Naive thymus-derived CD4-positive, alpha-beta T cell (primary cell): ENCODE measurements at regions of chr16 and their contacts with region 1.

Region 1: DNA sequence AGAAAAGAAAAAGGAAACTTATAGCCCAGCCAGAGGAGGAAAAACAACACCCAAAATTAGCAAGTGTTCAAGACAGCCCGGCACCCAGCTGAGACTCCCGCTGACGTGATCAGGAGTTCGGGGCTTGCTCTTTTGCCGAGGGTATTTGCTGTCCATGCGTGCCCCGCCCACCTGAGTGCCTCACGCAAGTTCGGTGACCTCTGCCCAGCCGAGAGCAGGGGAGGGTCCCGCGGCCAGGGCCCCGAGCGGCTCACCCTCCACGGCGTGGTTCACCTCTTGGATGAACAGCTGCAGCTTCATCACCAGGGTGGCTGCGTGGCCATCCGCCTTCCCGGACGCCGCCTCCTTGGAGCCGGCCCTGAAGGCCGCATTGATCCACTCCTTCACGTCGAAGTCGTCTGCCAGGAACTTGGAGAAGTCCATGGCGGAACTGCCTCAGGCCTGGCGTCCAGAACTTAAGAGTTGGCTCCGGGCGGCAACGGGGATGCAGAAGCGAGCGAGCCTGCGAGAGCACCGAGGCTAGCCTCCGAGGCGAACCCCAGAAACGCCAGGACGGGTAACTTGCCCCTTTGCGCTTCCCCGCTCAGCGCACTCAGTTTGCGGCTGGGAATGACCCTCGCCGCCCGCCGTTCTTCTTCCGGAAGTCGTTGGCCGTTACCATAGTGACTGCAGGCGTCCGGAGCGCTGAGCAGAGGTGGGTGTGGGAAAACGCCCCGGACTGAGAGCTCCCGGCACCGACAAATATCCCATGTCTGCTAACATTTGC is at the start of gene COG7:
- DNase-seq: peak; percentile 71 to 88 (median 85)
- ATAC-seq: peak; percentile 94
- H3K4me3 ChIP-seq: peak within 1 kb of the TSS; percentile 92
- H3K4me3 Mint-ChIP-seq: peak within 1 kb of the TSS; percentile 88 to 99 (median 93)
- H3K27ac ChIP-seq: peak within 1 kb of the TSS; percentile 78
- H3K27ac Mint-ChIP-seq: peak within 1 kb of the TSS; percentile 87 to 96 (median 91)
- H3K4me1 ChIP-seq: peaks cover 9 to 10% of the 10 kb centered on the region in 2 donors
- H3K4me1 Mint-ChIP-seq: peaks cover 27 to 44% (median 39%) of the 10 kb centered on the region in 7 donors
- H3K27me3 ChIP-seq: no peaks in the 10 kb centered on the region
- H3K27me3 Mint-ChIP-seq: no peaks in the 10 kb centered on the region
- total RNA-seq, gene COG7: 16.1 to 28.4 (median 22.6) TPM

Region 2: DNA sequence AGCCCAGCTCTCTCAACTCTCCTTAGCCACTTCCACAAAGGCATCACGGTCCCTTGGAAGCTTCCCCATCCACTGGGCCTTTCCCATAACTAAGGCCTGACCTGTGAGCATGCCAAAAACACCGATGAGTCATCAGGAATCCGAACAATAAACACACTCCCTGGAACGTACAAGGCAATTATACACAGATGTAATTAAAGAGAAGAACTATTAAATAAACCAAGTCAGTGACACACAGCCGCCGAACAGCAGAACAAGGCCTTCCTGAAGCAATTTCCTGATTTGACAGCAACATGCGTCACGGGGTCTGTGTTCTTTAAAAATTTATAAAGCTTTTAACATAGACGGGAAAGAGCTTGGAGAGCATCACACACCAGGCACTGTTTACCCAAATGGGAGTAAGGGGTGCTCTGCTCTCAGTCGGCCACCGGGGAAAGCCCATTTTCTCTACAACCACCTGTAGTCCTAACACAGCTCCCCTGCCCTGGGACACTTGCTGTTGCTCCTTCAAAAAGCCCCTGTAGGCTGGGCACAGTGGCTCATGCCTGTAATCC is 29.2 kb before region 1 on chr16:
- CTCF ChIA-PET with region 1: no interaction called
- POLR2A ChIA-PET with region 1: no interaction called
- intact Hi-C with region 1: no loop called
- DNase-seq: no peak
- ATAC-seq: no peak
- H3K4me3 ChIP-seq: no peak overlapping the region
- H3K4me3 Mint-ChIP-seq: no peak overlapping the region
- H3K27ac ChIP-seq: no peak overlapping the region
- H3K27ac Mint-ChIP-seq: no peak overlapping the region
- H3K4me1 ChIP-seq: no peaks in the 10 kb centered on the region
- H3K4me1 Mint-ChIP-seq: peaks cover 0 to 2% (median 0%) of the 10 kb centered on the region in 7 donors
- H3K27me3 ChIP-seq: no peaks in the 10 kb centered on the region
- H3K27me3 Mint-ChIP-seq: no peaks in the 10 kb centered on the region

Region 3: DNA sequence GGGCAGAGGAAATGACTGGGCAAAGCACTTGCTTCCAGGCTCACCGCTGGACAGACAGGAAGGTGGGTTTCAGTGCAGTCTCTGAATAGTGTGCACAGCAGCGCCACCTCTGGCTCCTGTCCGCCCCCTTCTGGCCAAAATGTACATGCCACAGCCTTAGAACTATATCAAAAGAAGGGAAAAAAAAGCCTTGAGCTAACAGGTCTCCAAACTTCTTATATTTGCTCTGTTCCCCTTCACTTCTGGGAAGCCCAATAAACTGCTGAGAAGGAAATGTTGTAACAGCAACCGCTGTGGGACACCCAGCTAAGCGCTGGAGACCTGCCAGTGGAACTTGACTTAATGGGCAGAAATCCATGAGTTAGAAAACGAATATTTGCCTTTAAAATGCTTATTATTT is 17.3 kb before region 1 on chr16:
- CTCF ChIA-PET with region 1: interaction called, 5 read pairs
- POLR2A ChIA-PET with region 1: interaction called, 4 read pairs
- intact Hi-C with region 1: loop called (anchors 2 kb)
- DNase-seq: peak; percentile 5 to 60 (median 48)
- ATAC-seq: peak; percentile 89
- H3K4me3 ChIP-seq: no peak overlapping the region
- H3K4me3 Mint-ChIP-seq: no peak overlapping the region
- H3K27ac ChIP-seq: no peak overlapping the region
- H3K27ac Mint-ChIP-seq: peak overlapping the region in 1 of 9 donors; percentile 53
- H3K4me1 ChIP-seq: no peaks in the 10 kb centered on the region
- H3K4me1 Mint-ChIP-seq: peaks cover 0 to 4% (median 0%) of the 10 kb centered on the region in 7 donors
- H3K27me3 ChIP-seq: no peaks in the 10 kb centered on the region
- H3K27me3 Mint-ChIP-seq: no peaks in the 10 kb centered on the region

Region 4: DNA sequence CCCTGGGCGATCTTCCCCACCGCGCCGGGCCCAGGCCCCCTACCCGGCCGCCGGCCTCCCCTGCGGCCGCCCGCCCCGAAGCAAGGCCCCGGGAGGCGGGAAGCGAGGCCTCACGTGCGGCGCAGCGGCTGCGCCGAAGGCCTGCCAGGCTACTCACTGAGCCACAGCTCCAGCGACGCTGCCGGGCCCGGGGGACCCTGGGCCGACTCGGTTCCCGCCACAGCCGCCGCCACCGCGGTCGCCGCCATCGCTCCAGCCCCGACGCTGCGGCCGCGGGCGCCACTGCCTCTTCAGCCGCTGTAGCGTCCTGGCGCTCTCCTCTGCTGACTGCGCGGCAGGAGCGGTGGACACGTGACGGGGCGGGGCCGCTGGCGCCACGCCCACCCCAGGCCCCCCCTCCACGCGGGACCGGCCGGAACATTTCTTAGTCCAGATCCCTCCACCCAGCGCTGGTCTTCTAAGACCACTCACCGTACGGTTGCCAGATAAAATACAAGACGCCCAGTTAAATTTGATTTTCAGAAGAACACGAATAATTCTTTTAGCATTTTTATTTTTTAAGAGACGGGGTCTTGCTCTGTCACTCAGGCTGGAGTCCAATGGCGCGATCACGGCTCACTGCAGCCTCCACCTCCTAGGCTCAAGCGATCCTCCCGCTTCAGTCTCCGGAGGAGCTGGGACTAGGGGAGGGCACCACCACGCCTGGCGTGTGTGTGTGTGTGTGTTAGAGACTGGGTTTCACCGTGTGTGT is 57.6 kb after region 1 on chr16 and contains the start of gene GGA2:
- CTCF ChIA-PET with region 1: no interaction called
- POLR2A ChIA-PET with region 1: interaction called, 6 read pairs
- intact Hi-C with region 1: loop called (anchors 1 to 2 kb)
- DNase-seq: peak; percentile 61 to 84 (median 74)
- ATAC-seq: peak; percentile 96
- H3K4me3 ChIP-seq: peak within 1 kb of the TSS; percentile 73
- H3K4me3 Mint-ChIP-seq: peak within 1 kb of the TSS; percentile 86 to 99 (median 92)
- H3K27ac ChIP-seq: peak within 1 kb of the TSS; percentile 74
- H3K27ac Mint-ChIP-seq: peak within 1 kb of the TSS; percentile 78 to 94 (median 83)
- H3K4me1 ChIP-seq: peaks cover 36 to 50% of the 10 kb centered on the region in 2 donors
- H3K4me1 Mint-ChIP-seq: peaks cover 43 to 65% (median 56%) of the 10 kb centered on the region in 7 donors
- H3K27me3 ChIP-seq: no peaks in the 10 kb centered on the region
- H3K27me3 Mint-ChIP-seq: no peaks in the 10 kb centered on the region
- total RNA-seq, gene GGA2: 99.3 to 138 (median 104) TPM

Region 5: DNA sequence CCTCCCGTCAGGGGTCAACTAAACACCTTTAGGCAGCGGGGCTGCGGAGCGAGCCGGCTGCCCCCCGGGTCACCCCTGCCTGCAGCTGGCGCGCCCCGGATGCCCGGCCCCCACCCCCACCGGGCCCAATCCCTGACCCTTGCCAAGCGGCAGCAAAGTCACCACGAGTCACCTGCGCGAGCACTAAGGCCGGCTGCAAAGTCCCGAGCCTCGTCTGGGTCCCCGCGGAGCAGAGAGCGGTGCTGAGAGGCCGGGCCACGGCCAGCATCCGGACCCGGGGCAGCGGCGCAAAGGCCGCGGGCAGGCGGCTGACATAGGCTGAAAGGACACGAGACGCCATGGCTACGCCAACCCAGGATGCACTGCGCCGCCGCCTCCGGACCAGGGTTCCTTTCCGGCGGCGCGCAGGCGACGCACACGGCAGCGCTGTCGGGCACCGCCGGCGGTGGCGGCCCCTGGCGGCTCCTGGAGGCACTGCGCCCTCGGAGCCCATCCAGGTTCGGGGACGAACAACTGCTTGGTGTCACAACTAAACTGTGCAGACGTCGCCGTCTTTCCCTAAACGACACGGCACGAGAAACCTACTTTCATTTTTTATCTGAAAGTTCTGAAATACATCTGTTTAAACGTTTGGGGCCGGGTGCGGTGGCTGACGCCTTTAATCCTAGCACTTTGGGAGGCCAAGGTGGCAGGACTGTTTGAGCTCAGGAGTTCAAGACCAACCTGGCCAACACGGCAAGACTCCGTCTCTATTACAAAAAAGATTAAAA is 143.4 kb after region 1 on chr16 and contains the start of gene NDUFAB1:
- CTCF ChIA-PET with region 1: no interaction called
- POLR2A ChIA-PET with region 1: no interaction called
- intact Hi-C with region 1: loop called in 1 of 2 experiments (anchors 2 kb)
- DNase-seq: peak; percentile 82 to 97 (median 89)
- ATAC-seq: peak; percentile 100
- H3K4me3 ChIP-seq: peak within 1 kb of the TSS; percentile 82
- H3K4me3 Mint-ChIP-seq: peak within 1 kb of the TSS; percentile 74 to 89 (median 84)
- H3K27ac ChIP-seq: peak within 1 kb of the TSS; percentile 94
- H3K27ac Mint-ChIP-seq: peak within 1 kb of the TSS; percentile 65 to 89 (median 83)
- H3K4me1 ChIP-seq: peaks cover 5 to 13% of the 10 kb centered on the region in 2 donors
- H3K4me1 Mint-ChIP-seq: peaks cover 17 to 48% (median 29%) of the 10 kb centered on the region in 7 donors
- H3K27me3 ChIP-seq: no peaks in the 10 kb centered on the region
- H3K27me3 Mint-ChIP-seq: no peaks in the 10 kb centered on the region
- total RNA-seq, gene NDUFAB1: 24.2 to 85.3 (median 38.2) TPM

Region 6: DNA sequence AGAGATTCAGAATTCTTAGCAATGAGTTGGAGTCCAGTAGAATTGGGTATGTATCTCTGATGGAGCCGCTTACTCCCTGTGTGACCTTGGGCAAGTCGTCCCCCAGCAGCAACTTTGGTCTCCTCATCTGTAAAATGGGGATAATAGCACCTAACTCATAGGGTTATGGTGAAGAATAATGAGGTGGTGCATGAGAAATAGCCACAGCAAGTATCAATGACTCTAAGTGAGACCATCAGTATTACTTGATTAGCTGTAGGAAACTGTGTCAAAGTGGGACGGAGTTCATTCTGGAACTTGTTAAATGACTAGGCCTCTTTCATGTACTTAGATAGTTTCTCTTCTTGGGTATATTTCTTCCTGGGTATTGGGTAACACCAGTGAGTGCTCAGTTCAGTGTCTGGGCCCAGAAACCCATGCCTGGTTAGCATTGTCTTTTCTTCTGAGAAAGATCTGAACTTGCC is 389.4 kb after region 1 on chr16:
- CTCF ChIA-PET with region 1: no interaction called
- POLR2A ChIA-PET with region 1: no interaction called
- intact Hi-C with region 1: no loop called
- DNase-seq: no peak
- ATAC-seq: peak; percentile 29
- H3K4me3 ChIP-seq: no peak overlapping the region
- H3K4me3 Mint-ChIP-seq: peak overlapping the region in 1 of 10 donors; percentile 51
- H3K27ac ChIP-seq: no peak overlapping the region
- H3K27ac Mint-ChIP-seq: peak overlapping the region in 7 of 9 donors; percentile 24 to 85 (median 75)
- H3K4me1 ChIP-seq: peaks cover 24 to 27% of the 10 kb centered on the region in 2 donors
- H3K4me1 Mint-ChIP-seq: peaks cover 51 to 83% (median 72%) of the 10 kb centered on the region in 7 donors
- H3K27me3 ChIP-seq: no peaks in the 10 kb centered on the region
- H3K27me3 Mint-ChIP-seq: no peaks in the 10 kb centered on the region